Mammary epithelial cell (primary cell): ENCODE measurements at regions of chr4 and their contacts with region 1.

Region 1: DNA sequence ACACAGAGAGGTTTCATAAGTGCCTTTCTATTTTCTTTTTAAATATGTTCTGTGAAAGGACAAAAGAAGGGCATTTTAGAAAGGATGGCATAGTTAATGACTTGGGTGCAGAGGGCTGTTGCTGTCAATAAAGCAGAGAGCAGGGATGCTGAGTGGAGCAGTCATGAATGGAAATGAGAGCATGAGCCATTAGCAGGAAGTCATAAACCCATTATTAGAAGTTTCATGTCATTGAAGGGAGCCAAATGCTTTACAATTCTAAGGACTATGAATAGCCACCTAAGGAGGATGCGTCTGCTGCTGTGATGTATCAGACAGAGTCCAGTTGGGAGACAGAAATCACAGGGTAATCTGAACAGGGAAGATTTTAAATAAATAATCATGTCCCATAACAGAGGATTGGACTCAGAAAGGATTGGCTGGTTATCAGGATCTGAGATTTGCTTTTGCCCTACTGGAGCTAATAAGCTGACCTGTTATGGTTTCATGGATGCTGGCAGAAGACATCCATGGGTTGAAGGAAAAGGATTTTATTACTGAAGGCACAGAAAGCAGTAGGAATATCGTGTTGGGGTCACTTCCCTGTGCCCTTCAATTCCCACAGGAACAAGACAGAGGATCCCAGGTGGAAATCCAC is 47.5 kb upstream of the WDR19 start:
- DNase-seq: no peak
- H3K4me3 ChIP-seq: no peak overlapping the region
- H3K27ac ChIP-seq: no peak overlapping the region
- H3K4me1 ChIP-seq: no peaks in the 10 kb centered on the region
- H3K27me3 ChIP-seq: no peaks in the 10 kb centered on the region
- CTCF ChIP-seq: no peak

Region 2: GRCh38 chr4:38768968-38769394 is 365.8 kb before region 1 on chr4:
- CTCF ChIA-PET with region 1: no interaction called
- dilution Hi-C with region 1: no loop called
- in situ Hi-C with region 1: no loop called
- intact Hi-C with region 1: no loop called
- DNase-seq: no peak
- H3K4me3 ChIP-seq: no peak overlapping the region
- H3K27ac ChIP-seq: no peak overlapping the region
- H3K4me1 ChIP-seq: no peaks in the 10 kb centered on the region
- H3K27me3 ChIP-seq: no peaks in the 10 kb centered on the region
- CTCF ChIP-seq: no peak

Region 3: GRCh38 chr4:38902695-38903094 is 232.1 kb before region 1 on chr4:
- CTCF ChIA-PET with region 1: interaction called, 20 read pairs
- dilution Hi-C with region 1: no loop called
- in situ Hi-C with region 1: loop called (anchors 5 to 10 kb)
- intact Hi-C with region 1: loop called (anchors 1 kb)
- DNase-seq: peak; percentile 17
- H3K4me3 ChIP-seq: no peak overlapping the region
- H3K27ac ChIP-seq: no peak overlapping the region
- H3K4me1 ChIP-seq: no peaks in the 10 kb centered on the region
- H3K27me3 ChIP-seq: no peaks in the 10 kb centered on the region
- CTCF ChIP-seq: peak; percentile 7 to 30

Region 4: GRCh38 chr4:38993694-38994093 is 141.1 kb before region 1 on chr4:
- CTCF ChIA-PET with region 1: no interaction called
- dilution Hi-C with region 1: no loop called
- in situ Hi-C with region 1: no loop called
- intact Hi-C with region 1: loop called (anchors 10 kb)
- DNase-seq: no peak
- H3K4me3 ChIP-seq: no peak overlapping the region
- H3K27ac ChIP-seq: no peak overlapping the region
- H3K4me1 ChIP-seq: no peaks in the 10 kb centered on the region
- H3K27me3 ChIP-seq: no peaks in the 10 kb centered on the region
- CTCF ChIP-seq: peak; percentile 18 to 19

Region 5: GRCh38 chr4:39044956-39045826 is 89.6 kb before region 1 on chr4:
- CTCF ChIA-PET with region 1: no interaction called
- dilution Hi-C with region 1: no loop called
- in situ Hi-C with region 1: no loop called
- intact Hi-C with region 1: loop called (anchors 5 kb)
- DNase-seq: peak; percentile 18
- H3K4me3 ChIP-seq: peak overlapping the region; percentile 59 to 87 (median 66)
- H3K27ac ChIP-seq: peak overlapping the region; percentile 67
- H3K4me1 ChIP-seq: peaks cover 22% of the 10 kb centered on the region
- H3K27me3 ChIP-seq: no peaks in the 10 kb centered on the region
- CTCF ChIP-seq: no peak